ENCODE measurements at regions of chr4 and their contacts with region 1.

Region 1: DNA sequence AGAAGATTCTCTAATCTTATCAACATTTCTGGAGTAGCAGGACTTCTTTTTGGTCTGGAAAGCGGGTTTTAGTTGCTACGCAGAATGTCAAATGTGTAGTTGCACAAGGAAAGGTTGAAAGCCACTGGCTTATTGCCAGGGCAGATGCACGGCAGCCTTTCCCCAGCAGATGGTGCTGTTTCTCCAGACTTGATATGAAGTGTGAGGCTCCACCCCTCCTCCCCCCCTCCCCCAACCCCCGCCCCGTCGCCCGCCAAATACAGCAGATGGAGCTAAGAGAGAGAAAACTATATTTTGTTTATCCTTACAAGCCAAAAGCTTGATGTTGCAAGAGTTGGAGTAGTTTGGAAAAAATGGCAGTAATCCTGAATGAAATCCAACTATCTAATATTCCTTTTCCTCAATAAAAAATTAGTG is 32.0 kb downstream of the ENOPH1 start:
- DNase-seq: peak; percentile 65
- H3K4me3 Mint-ChIP-seq: no peak overlapping the region
- H3K27ac Mint-ChIP-seq: no peak overlapping the region
- H3K4me1 Mint-ChIP-seq: peaks cover 5% of the 10 kb centered on the region
- H3K27me3 Mint-ChIP-seq: no peaks in the 10 kb centered on the region

Region 2: DNA sequence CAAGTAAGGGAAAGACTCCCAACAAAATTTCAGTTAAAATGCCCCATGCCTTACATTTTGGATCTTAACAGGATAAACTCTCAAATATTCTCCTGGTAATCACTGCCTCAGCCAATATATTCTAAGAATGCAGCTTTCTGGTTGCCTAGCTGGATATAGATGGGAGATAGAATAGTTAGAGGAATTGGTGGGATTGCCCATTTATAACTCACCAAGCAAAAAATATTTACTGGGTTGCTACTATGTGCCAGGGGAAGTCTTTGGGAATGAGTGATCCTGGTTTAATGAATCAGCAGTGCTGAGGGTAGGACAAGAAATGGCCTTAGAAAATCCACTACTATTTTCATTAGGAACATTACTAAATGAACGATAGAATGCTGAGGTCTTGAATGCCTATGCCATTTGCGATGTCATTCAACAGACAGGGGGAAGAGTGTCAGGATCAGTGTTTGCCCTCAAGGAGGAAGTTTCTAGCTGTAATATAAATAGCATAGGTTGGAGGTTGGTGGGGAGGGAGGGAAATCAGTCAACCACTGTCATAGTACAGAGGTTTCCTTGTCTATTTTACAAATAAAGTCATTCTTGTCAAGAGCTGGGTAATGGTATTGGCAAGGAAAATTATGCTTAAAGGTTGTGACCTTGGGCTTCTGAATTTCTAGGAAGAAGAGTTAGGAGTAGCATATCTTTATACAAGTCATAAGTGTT is 31.4 kb after region 1 on chr4:
- intact Hi-C with region 1: no loop called
- DNase-seq: no peak
- H3K4me3 Mint-ChIP-seq: no peak overlapping the region
- H3K27ac Mint-ChIP-seq: no peak overlapping the region
- H3K4me1 Mint-ChIP-seq: no peaks in the 10 kb centered on the region
- H3K27me3 Mint-ChIP-seq: no peaks in the 10 kb centered on the region

Region 3: DNA sequence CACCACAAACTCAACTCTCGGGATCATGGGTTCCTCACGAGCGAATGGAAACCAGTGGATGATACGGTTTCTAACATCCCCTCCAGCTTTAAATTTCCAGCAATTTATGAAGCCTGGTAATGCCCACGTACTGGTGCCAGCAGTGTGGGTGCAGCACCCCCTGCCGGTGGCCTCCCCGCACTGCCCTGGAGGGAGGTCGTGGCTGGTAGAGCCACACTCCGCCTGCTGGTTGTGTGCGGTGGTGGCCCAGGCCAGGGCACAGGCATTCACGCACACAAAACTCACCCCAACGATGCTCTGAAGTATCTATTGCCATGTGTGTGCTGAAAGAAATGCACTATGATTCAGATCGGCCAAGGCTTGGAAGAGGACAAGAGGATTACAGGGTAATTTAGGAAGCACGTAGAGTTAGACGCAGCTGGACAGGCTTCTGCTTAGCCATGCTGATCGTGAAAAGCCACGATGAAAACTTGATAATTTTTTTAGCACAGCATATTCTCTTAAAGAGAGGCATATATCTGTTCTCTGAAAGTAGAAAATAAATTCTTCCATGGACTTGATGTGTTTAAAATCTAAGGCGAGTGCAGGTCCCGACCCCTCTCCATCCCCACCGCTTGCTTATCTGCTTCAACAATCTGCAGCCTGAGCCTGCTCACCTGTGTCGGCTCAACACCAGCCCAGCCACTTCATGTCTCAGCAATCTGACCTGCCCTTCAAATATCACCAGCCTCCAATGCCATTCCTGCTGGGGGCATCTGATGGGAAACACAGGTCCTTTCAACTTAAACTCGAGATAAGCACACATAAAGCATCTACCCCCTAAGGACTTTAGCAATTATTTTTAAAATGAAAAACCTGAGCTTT is 277.1 kb after region 1 on chr4:
- intact Hi-C with region 1: loop called (anchors 1 kb)
- DNase-seq: peak; percentile 57
- H3K4me3 Mint-ChIP-seq: no peak overlapping the region
- H3K27ac Mint-ChIP-seq: no peak overlapping the region
- H3K4me1 Mint-ChIP-seq: no peaks in the 10 kb centered on the region
- H3K27me3 Mint-ChIP-seq: peaks cover 2% of the 10 kb centered on the region

Measured in activated T-helper 1 cell treated with anti-CD3 and anti-CD28 coated beads, Interleukin-12 subunit alpha, Interleukin-12 subunit beta, Interleukin-2, Interleukin-4 antibody, amounts not matched to agents 30 ng/mL and 10 ng/mL and 1 ng/mL, durations not matched to agents 14 hours and 24 hours and 36 hours (primary cell).